GM12878 (cell line): ENCODE measurements at regions of chr10 and their contacts with region 1.

Region 1: GRCh38 chr10:100046021-100046486 is 35.6 kb downstream of the CPN1 start:
- DNase-seq: peak; percentile 50
- ATAC-seq: peak; percentile 96
- H3K4me3 ChIP-seq: no peak overlapping the region
- H3K27ac ChIP-seq: peak overlapping the region; percentile 31; the same call in 1 of the 2 replicates
- H3K4me1 ChIP-seq: peaks cover 29% of the 10 kb centered on the region
- H3K27me3 ChIP-seq: no peaks in the 10 kb centered on the region
- CTCF ChIP-seq: peak; percentile 90 to 95 (median 91)
- EP300 ChIP-seq: no peak
- POLR2A ChIP-seq: no peak
- RAD21 ChIP-seq: peak; percentile 95

Region 2: DNA sequence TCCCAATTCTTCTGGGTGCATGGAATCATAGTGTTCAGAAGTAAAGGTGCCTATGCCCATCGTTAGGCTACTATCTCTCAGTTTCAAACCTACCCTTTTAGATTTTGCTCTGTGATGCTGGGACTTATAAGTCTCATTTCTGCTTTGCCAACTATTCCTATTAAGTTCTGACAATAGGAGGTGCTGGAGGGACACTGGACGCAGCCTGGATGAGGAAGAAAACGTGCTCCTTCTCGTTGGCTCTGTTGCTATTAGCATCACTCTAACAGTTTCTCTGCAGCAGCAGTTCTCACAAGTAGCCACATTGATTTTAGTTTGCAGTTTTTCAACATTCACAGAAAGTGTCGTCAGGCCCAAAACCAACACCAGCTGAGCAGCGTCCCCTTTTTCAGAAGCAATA is 191.2 kb before region 1 on chr10:
- CTCF ChIA-PET with region 1: interaction called, 340 read pairs
- POLR2A ChIA-PET with region 1: no interaction called
- RAD21 ChIA-PET with region 1: interaction called, 152 read pairs
- SMC1A ChIA-PET with region 1: interaction called, 173 read pairs
- in situ Hi-C with region 1: no loop called
- intact Hi-C with region 1: no loop called
- DNase-seq: no peak
- ATAC-seq: no peak
- H3K4me3 ChIP-seq: no peak overlapping the region
- H3K27ac ChIP-seq: no peak overlapping the region
- H3K4me1 ChIP-seq: no peaks in the 10 kb centered on the region
- H3K27me3 ChIP-seq: no peaks in the 10 kb centered on the region
- CTCF ChIP-seq: peak in 1 of 3 experiments; percentile 26; a peak in 1 of 6 replicates
- EP300 ChIP-seq: no peak
- POLR2A ChIP-seq: no peak
- RAD21 ChIP-seq: peak; percentile 31; the same call in 1 of the 2 replicates

Region 3: DNA sequence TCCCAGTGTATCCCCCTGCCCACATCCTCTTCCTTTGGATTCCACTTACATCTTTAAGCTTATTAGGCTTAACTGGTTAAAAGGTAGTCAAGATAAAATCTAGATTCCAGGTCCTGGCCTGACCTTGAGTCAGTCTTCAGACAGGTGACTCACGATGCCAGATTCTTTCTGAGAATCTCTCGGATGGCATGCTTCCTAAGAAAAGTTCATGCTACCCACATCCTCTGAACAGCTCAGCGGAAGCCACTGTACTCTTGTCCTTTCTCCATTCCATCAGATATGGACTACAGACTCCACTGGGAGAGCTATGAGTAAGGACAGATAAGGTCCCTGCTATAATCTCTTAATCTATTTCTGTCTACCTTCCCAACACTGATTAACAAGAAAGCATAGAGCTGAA is 79.7 kb before region 1 on chr10:
- CTCF ChIA-PET with region 1: interaction called, 50 read pairs
- POLR2A ChIA-PET with region 1: no interaction called
- RAD21 ChIA-PET with region 1: interaction called, 14 read pairs
- SMC1A ChIA-PET with region 1: interaction called, 21 read pairs
- in situ Hi-C with region 1: no loop called
- intact Hi-C with region 1: no loop called
- DNase-seq: no peak
- ATAC-seq: no peak
- H3K4me3 ChIP-seq: no peak overlapping the region
- H3K27ac ChIP-seq: no peak overlapping the region
- H3K4me1 ChIP-seq: no peaks in the 10 kb centered on the region
- H3K27me3 ChIP-seq: no peaks in the 10 kb centered on the region
- CTCF ChIP-seq: no peak
- EP300 ChIP-seq: no peak
- POLR2A ChIP-seq: no peak
- RAD21 ChIP-seq: no peak

Region 4: GRCh38 chr10:99983280-99983988 is 62.6 kb before region 1 on chr10:
- CTCF ChIA-PET with region 1: interaction called, 103 read pairs
- POLR2A ChIA-PET with region 1: interaction called, 4 read pairs
- RAD21 ChIA-PET with region 1: interaction called, 12 read pairs
- SMC1A ChIA-PET with region 1: interaction called, 66 read pairs
- in situ Hi-C with region 1: no loop called
- intact Hi-C with region 1: no loop called
- DNase-seq: peak; percentile 48
- ATAC-seq: peak; percentile 86
- H3K4me3 ChIP-seq: peak overlapping the region; percentile 57; the same call in 1 of the 2 replicates
- H3K27ac ChIP-seq: peak overlapping the region; percentile 90
- H3K4me1 ChIP-seq: peaks cover 63% of the 10 kb centered on the region
- H3K27me3 ChIP-seq: no peaks in the 10 kb centered on the region
- CTCF ChIP-seq: no peak
- EP300 ChIP-seq: no peak
- POLR2A ChIP-seq: 0 out of 2 replicates have a peak, but pooled peaks have one; percentile 25
- RAD21 ChIP-seq: no peak

Region 5: GRCh38 chr10:100009793-100010676 is 36.0 kb before region 1 on chr10 and contains the start of gene DNMBP:
- CTCF ChIA-PET with region 1: interaction called, 59 read pairs
- POLR2A ChIA-PET with region 1: interaction called, 4 read pairs
- RAD21 ChIA-PET with region 1: interaction called, 57 read pairs
- SMC1A ChIA-PET with region 1: interaction called, 52 read pairs
- in situ Hi-C with region 1: no loop called
- intact Hi-C with region 1: loop called (anchors 2 kb)
- DNase-seq: no peak
- ATAC-seq: peak; percentile 69
- H3K4me3 ChIP-seq: peak within 1 kb of the TSS; percentile 97
- H3K27ac ChIP-seq: peak within 1 kb of the TSS; percentile 78
- H3K4me1 ChIP-seq: peaks cover 22% of the 10 kb centered on the region
- H3K27me3 ChIP-seq: no peaks in the 10 kb centered on the region
- CTCF ChIP-seq: peak; percentile 40 to 58 (median 53); a peak in 5 of 6 replicates
- EP300 ChIP-seq: no peak
- POLR2A ChIP-seq: peak; percentile 89
- RAD21 ChIP-seq: peak; percentile 65
- polyA plus RNA-seq, gene DNMBP: 7.1 to 9.8 TPM

Region 6: GRCh38 chr10:100061401-100061800 is 15.3 kb after region 1 on chr10:
- CTCF ChIA-PET with region 1: interaction called, 13 read pairs
- POLR2A ChIA-PET with region 1: no interaction called
- RAD21 ChIA-PET with region 1: no interaction called
- SMC1A ChIA-PET with region 1: interaction called, 3 read pairs
- in situ Hi-C with region 1: no loop called
- intact Hi-C with region 1: no loop called
- DNase-seq: no peak
- ATAC-seq: no peak
- H3K4me3 ChIP-seq: no peak overlapping the region
- H3K27ac ChIP-seq: no peak overlapping the region
- H3K4me1 ChIP-seq: no peaks in the 10 kb centered on the region
- H3K27me3 ChIP-seq: no peaks in the 10 kb centered on the region
- CTCF ChIP-seq: no peak
- EP300 ChIP-seq: no peak
- POLR2A ChIP-seq: no peak
- RAD21 ChIP-seq: no peak